ENCODE measurements at regions of chr12 and their contacts with region 1.

Region 1: DNA sequence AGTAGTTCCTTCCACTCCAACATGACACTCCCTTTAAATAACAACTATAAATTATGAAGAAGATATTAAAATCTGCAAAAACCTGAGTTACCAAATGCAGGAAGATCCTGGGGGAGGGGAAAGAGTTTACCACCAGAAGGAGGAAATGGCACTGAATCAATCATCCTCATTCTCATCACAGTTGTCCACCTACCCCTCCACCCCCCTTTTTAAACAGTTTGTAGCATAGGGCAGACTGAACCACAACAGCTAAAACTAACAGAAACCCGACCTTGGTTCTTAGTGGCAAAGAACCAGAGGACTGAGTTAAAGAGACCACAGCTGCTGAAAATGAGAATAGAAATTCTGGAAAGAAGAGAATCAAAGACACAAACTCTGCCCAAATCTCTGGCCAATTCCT is 189.5 kb downstream of the MED13L start:
- DNase-seq: no peak
- H3K4me3 Mint-ChIP-seq: peak overlapping the region; percentile 40
- H3K27ac Mint-ChIP-seq: peak overlapping the region; percentile 70
- H3K4me1 Mint-ChIP-seq: peaks cover 45% of the 10 kb centered on the region
- H3K27me3 Mint-ChIP-seq: no peaks in the 10 kb centered on the region

Region 2: GRCh38 chr12:116066381-116067230 is 21.4 kb before region 1 on chr12:
- intact Hi-C with region 1: loop called (anchors 2 kb)
- DNase-seq: peak; percentile 40
- H3K4me3 Mint-ChIP-seq: no peak overlapping the region
- H3K27ac Mint-ChIP-seq: no peak overlapping the region
- H3K4me1 Mint-ChIP-seq: peaks cover 17% of the 10 kb centered on the region
- H3K27me3 Mint-ChIP-seq: no peaks in the 10 kb centered on the region

Region 3: DNA sequence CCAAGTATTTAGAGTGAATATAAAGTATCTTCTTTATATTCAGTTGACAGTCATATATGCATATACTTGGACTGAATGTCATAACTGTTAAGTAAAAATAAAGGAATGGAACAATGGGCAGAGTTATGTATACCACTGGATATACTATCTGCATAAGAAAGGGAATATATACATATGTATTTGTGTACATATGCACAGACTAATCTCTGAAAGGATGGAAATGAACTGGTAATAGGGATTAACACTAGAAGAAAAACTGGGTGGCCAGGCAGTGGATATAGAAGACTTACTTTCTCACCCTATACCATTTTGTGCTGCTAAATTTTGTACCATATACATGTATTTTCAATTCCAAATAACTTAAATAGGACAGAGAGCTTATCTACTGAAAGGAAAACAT is 10.5 kb before region 1 on chr12:
- intact Hi-C with region 1: no loop called
- DNase-seq: no peak
- H3K4me3 Mint-ChIP-seq: no peak overlapping the region
- H3K27ac Mint-ChIP-seq: no peak overlapping the region
- H3K4me1 Mint-ChIP-seq: peaks cover 16% of the 10 kb centered on the region
- H3K27me3 Mint-ChIP-seq: no peaks in the 10 kb centered on the region

Region 4: GRCh38 chr12:116123451-116124258 is 35.7 kb after region 1 on chr12:
- intact Hi-C with region 1: loop called (anchors 5 kb)
- DNase-seq: no peak
- H3K4me3 Mint-ChIP-seq: peak overlapping the region; percentile 26
- H3K27ac Mint-ChIP-seq: peak overlapping the region; percentile 20
- H3K4me1 Mint-ChIP-seq: peaks cover 42% of the 10 kb centered on the region
- H3K27me3 Mint-ChIP-seq: no peaks in the 10 kb centered on the region

Region 5: DNA sequence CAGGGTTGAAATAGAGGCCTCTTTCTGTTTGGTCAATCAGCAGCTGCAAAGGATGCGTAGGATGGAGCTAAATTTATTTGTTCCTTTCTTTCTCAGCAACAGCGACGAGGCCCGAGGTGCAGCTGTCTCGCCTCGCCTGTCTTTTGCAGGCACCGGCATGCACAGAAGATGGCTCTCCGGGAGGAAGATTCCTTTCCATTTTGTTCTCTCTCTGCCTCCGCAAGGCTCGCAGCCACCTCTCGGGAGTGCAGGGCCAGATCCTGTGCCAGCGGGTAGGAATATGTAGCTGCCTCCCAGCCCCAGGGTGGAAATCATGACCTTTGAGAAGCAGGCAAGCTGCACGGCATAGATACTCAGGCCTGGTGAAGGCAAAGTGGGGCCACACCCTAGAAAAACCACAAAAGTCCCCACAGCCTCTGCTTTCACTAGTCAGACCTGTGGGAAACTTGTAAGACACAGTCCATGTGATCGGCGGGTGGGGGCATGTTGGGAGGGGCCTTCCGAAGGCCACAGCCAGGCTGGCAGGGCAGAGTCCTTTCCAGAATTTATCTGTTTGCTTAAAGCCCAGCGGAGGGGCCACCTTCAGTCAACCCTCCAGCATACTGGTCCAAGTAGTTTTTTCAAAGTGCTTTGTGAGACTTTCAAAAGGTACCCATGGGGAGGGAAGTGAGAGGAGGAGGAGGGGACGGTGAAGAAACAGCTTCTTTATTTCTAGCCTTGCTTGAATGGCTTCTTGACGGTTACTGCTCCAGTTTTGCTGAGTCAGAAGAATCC is 471.4 kb after region 1 on chr12 and contains the start of gene MAP1LC3B2:
- intact Hi-C with region 1: loop called (anchors 1 kb)
- DNase-seq: peak; percentile 86
- H3K4me3 Mint-ChIP-seq: peak within 1 kb of the TSS; percentile 51
- H3K27ac Mint-ChIP-seq: peak within 1 kb of the TSS; percentile 95
- H3K4me1 Mint-ChIP-seq: peaks cover 42% of the 10 kb centered on the region
- H3K27me3 Mint-ChIP-seq: no peaks in the 10 kb centered on the region
- total RNA-seq, gene MAP1LC3B2: 0.37 and 0.60 TPM in 2 replicates